ENCODE measurements at regions of chr11 and their contacts with region 1.

Region 1: DNA sequence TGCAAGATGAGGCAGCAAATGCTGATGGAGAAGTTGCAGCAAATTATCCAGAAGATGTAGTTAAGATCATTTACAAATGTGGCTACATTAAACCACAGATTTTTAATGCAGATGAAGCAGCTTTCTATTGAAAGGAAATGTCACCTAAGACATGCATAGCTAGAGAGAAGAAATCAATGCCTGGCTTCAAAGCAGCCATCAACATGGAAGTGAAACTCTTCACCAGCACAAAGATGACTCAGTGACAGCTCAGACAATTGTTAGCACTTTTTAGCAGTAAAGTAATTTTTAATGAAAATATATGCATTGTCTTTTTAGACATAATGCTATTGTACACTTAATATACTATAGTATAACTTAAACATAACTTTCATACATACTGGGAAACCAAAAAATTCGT is 71.4 kb downstream of the FANCF start:
- DNase-seq: no peak
- H3K4me3 ChIP-seq: no peak overlapping the region
- H3K27ac ChIP-seq: no peak overlapping the region
- H3K4me1 ChIP-seq: no peaks in the 10 kb centered on the region
- H3K27me3 ChIP-seq: peaks cover 4% of the 10 kb centered on the region
- CTCF ChIP-seq: no peak

Region 2: DNA sequence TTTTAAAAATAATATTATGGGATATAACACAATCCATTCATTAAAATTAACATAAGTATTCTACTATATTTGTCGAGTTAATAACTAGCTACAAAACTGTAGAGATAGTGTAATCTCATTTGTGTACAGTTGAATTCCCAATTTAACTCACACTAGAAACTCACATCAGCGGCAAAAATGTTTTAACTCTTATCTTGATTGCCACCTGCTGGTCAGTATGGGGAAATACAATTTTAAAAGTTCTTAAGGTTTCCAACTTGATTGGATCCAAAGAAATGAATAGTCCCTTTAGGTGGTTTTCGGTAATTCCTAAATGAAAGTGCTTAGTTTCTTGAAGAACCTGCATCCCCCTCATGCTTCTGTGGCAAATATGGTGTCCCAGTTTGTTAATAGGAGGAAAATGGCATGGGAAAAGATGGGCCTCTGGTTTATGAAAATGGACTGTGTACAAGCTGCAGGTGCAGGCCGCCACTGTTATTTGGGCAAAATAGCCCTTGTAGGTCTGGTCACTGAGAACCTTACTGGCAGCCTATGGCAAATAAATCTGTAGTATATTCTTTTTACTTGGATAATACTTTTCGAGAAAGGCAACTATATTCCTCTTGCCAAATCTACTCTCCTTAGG is 249.8 kb before region 1 on chr11:
- dilution Hi-C with region 1: loop called (anchors 25 kb)
- DNase-seq: no peak
- H3K4me3 ChIP-seq: no peak overlapping the region
- H3K27ac ChIP-seq: no peak overlapping the region
- H3K4me1 ChIP-seq: no peaks in the 10 kb centered on the region
- H3K27me3 ChIP-seq: no peaks in the 10 kb centered on the region
- CTCF ChIP-seq: peak in 2 of 3 experiments; percentile 24 to 50

Region 3: GRCh38 chr11:22426915-22427314 is 127.3 kb before region 1 on chr11:
- dilution Hi-C with region 1: loop called (anchors 10 kb)
- DNase-seq: no peak
- H3K4me3 ChIP-seq: no peak overlapping the region
- H3K27ac ChIP-seq: no peak overlapping the region
- H3K4me1 ChIP-seq: no peaks in the 10 kb centered on the region
- H3K27me3 ChIP-seq: no peaks in the 10 kb centered on the region
- CTCF ChIP-seq: no peak

Region 4: GRCh38 chr11:22625448-22626287 is 71.4 kb after region 1 on chr11 and contains the start of gene FANCF:
- dilution Hi-C with region 1: no loop called
- DNase-seq: peak; percentile 94
- H3K4me3 ChIP-seq: peak within 1 kb of the TSS; percentile 73 to 93 (median 77)
- H3K27ac ChIP-seq: peak within 1 kb of the TSS; percentile 73
- H3K4me1 ChIP-seq: peaks cover 8% of the 10 kb centered on the region
- H3K27me3 ChIP-seq: no peaks in the 10 kb centered on the region
- CTCF ChIP-seq: no peak
- polyA plus RNA-seq, gene FANCF: 3.2 to 5.8 TPM (median 5.2 TPM) in 3 replicates

Region 5: DNA sequence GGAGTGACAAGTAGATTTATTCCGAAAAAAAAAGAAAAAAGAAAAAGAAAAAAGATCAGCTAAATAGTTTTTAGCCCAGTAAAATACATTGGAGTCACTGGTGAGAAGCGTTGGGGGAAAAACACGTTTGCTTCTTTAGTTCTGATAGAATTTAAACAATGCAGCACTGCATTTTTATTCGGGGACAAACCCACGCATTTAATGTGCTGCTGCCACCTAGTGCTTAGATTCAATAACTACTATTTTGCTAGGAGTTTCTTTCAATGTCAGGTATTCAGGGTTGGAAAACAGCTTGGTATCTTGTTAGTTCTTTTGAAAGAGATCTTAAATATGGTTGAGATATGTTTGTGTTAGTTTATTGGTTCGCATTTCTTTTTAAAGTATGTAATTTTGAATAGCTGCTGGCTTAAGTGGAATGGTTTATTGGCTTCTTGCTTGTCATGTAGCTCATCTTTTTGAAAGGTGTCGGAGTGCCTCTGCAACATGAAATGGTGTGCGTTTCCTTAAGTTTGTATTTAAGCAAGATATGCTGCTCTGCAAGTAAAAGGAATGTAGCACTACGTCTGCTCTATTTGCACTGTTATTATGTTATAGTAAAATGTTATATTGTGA is 233.4 kb after region 1 on chr11:
- dilution Hi-C with region 1: loop called (anchors 25 kb)
- DNase-seq: no peak
- H3K4me3 ChIP-seq: no peak overlapping the region
- H3K27ac ChIP-seq: no peak overlapping the region
- H3K4me1 ChIP-seq: no peaks in the 10 kb centered on the region
- H3K27me3 ChIP-seq: no peaks in the 10 kb centered on the region
- CTCF ChIP-seq: peak; percentile 19 to 62 (median 60)